PC-3 (cell line): ENCODE measurements at regions of chr9 and their contacts with region 1.

Region 1: GRCh38 chr9:93962561-93963440 is 7.6 kb upstream of the BARX1 start:
- DNase-seq: peak; percentile 82
- ATAC-seq: peak; percentile 84
- H3K4me3 ChIP-seq: peak overlapping the region; percentile 56
- H3K27ac ChIP-seq: no peak overlapping the region
- H3K4me1 ChIP-seq: no peaks in the 10 kb centered on the region; the same call in 1 of the 2 replicates
- H3K27me3 ChIP-seq: no peaks in the 10 kb centered on the region
- CTCF ChIP-seq: peak; percentile 78

Region 2: DNA sequence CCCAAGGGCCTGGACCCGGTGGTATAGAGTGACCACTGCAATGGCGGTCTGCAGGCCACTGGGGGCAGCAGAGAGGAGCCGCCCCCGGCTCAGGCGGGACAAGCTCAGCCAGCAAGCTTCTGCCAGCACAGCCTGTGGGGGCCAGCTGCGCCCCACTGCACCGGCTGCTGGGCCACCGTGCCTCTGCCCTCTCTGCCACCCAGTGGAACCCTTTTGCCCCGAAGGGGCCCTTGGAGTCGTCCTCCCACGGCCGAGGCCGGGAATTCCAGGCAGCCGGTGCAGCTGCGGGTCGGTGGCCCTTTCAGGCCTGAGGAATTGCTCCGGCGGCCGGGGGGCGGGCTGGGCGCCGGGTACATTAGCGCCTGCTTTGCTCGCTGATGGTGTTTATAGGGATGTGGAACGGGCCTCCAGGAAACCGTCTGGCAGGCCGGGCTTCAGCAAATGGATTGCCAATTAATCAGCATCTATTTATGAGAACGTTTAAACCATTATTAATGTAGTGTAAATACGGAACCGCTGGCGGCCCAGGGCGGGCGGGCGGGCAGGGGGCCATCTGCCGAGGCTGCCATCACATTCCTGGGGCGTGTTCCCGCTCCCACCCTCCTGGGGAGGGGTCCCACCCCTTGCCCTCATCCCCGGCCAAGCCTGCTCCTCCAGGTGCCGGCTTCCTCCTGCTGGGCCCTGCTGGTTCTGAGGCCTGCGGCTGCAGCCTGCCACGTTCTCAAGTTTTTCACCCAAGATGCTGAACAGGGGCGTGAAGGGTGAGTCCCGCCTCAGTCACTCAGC is 135.1 kb before region 1 on chr9:
- CTCF ChIA-PET with region 1: no interaction called
- POLR2A ChIA-PET with region 1: no interaction called
- intact Hi-C with region 1: loop called (anchors 5 kb)
- DNase-seq: peak; percentile 59
- ATAC-seq: peak; percentile 98
- H3K4me3 ChIP-seq: peak overlapping the region; percentile 57; the same call in 1 of the 2 replicates
- H3K27ac ChIP-seq: no peak overlapping the region
- H3K4me1 ChIP-seq: no peaks in the 10 kb centered on the region
- H3K27me3 ChIP-seq: no peaks in the 10 kb centered on the region
- CTCF ChIP-seq: peak; percentile 66